ENCODE measurements at regions of chr17 and their contacts with region 1.

Region 1: GRCh38 chr17:67376737-67377487 is at the start of gene PITPNC1:
- DNase-seq: peak; percentile 97
- H3K4me3 ChIP-seq: peak within 1 kb of the TSS; percentile 83
- H3K27ac ChIP-seq: peak within 1 kb of the TSS; percentile 91
- H3K4me1 ChIP-seq: peaks cover 4% of the 10 kb centered on the region
- H3K27me3 ChIP-seq: no peaks in the 10 kb centered on the region
- total RNA-seq, gene PITPNC1: 5.8 and 9.2 TPM in 2 replicates

Region 2: GRCh38 chr17:67280279-67280678 is 96.6 kb before region 1 on chr17:
- in situ Hi-C with region 1: no loop called
- DNase-seq: no peak
- H3K4me3 ChIP-seq: no peak overlapping the region
- H3K27ac ChIP-seq: no peak overlapping the region
- H3K4me1 ChIP-seq: 0 out of 2 replicates have a peak, but pooled peaks cover 3% of the 10 kb centered on the region
- H3K27me3 ChIP-seq: no peaks in the 10 kb centered on the region

Region 3: DNA sequence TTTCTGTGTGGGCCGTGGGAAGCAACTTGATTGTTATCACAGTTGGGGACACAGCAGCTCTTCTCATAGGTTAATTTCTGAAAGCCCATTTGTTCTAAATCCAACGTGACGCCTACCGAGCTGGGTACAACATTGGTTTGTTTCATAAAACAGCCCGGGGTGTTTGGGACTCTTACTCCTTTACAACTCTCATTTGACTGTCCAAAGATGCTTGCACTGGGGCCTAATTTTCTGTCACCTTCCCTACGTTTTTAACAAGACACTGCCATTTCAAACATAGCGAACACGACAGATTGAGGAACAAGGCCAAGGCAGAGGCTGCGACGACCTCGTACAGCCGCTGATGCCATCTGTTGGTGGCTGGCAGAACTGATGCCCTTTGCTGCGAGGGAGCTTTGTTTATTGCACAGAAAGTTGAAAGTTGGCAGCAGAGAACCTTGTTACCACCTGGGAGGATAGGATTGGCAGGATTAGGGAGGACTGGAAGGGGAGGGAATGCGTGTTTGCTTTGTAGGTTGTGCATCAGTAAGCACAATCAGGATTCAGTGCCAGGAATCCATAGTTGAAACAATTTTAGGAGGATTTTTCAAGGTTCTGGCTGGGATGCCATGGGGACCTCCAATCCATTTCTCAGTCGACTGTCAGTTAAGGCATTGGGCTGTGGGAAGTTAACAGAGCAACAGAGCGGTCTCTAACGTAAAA is 98.5 kb after region 1 on chr17:
- in situ Hi-C with region 1: loop called (anchors 5 kb)
- DNase-seq: peak; percentile 86
- H3K4me3 ChIP-seq: no peak overlapping the region
- H3K27ac ChIP-seq: peak overlapping the region; percentile 70
- H3K4me1 ChIP-seq: peaks cover 27% of the 10 kb centered on the region
- H3K27me3 ChIP-seq: no peaks in the 10 kb centered on the region

Region 4: GRCh38 chr17:67629971-67630320 is 253.0 kb after region 1 on chr17:
- in situ Hi-C with region 1: loop called (anchors 10 kb)
- DNase-seq: peak; percentile 86
- H3K4me3 ChIP-seq: 0 out of 2 replicates have a peak overlapping the region, but pooled peaks have one; percentile 6
- H3K27ac ChIP-seq: peak overlapping the region; percentile 20
- H3K4me1 ChIP-seq: no peaks in the 10 kb centered on the region
- H3K27me3 ChIP-seq: no peaks in the 10 kb centered on the region

Region 5: GRCh38 chr17:67689534-67690177 is 312.7 kb after region 1 on chr17:
- in situ Hi-C with region 1: loop called (anchors 10 kb)
- DNase-seq: peak; percentile 79
- H3K4me3 ChIP-seq: no peak overlapping the region
- H3K27ac ChIP-seq: no peak overlapping the region
- H3K4me1 ChIP-seq: no peaks in the 10 kb centered on the region
- H3K27me3 ChIP-seq: no peaks in the 10 kb centered on the region